Uterus (tissue), 4 donors: ENCODE measurements at regions of chr14 and their contacts with region 1.

Region 1: DNA sequence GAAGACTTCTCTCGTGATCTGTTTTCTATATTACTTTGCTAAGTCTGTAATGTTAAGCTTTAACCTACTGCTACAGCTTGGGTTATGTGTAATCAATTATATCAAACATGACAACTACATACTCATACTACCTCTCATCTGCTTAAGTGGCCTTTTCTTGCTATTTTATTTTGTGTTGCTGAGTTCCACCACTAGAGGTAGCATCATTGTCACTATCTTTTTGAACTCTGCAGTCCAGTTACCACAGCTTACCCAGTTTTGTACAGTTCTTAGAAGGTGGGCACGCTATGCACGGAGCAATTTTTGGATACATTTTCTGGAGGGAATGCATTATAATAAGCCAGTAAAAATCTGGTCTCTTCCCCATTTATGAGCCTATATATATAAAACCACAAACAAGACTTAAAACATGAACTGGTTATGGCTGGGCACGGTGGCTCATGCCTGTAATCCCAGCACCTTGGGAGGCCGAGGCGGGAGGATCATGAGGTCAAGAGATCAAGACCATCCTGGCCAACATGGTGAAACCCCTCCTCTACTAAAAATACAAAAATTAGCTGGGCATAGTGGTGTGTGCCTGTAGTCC is 48.5 kb downstream of the SAV1 start:
- DNase-seq: no peak
- H3K4me3 ChIP-seq: no peak overlapping the region
- H3K27ac ChIP-seq: no peak overlapping the region
- H3K4me1 ChIP-seq: no peaks in the 10 kb centered on the region
- H3K27me3 ChIP-seq: no peaks in the 10 kb centered on the region
- CTCF ChIP-seq: peak; percentile 32 to 45 (median 38)
- POLR2A ChIP-seq: no peak

Region 2: GRCh38 chr14:49405291-49405690 is 1214.4 kb before region 1 on chr14:
- intact Hi-C with region 1: no loop called
- DNase-seq: no peak
- H3K4me3 ChIP-seq: no peak overlapping the region
- H3K27ac ChIP-seq: no peak overlapping the region
- H3K4me1 ChIP-seq: no peaks in the 10 kb centered on the region
- H3K27me3 ChIP-seq: no peaks in the 10 kb centered on the region
- CTCF ChIP-seq: no peak
- POLR2A ChIP-seq: no peak

Region 3: GRCh38 chr14:50003213-50004031 is 616.2 kb before region 1 on chr14:
- intact Hi-C with region 1: no loop called
- DNase-seq: peak; percentile 73 to 81
- H3K4me3 ChIP-seq: peak overlapping the region; percentile 27 to 48
- H3K27ac ChIP-seq: peak overlapping the region; percentile 85 to 87
- H3K4me1 ChIP-seq: peaks cover 5 to 13% of the 10 kb centered on the region in 2 donors
- H3K27me3 ChIP-seq: no peaks in the 10 kb centered on the region
- CTCF ChIP-seq: peak in 2 of 4 experiments; percentile 25 to 49
- POLR2A ChIP-seq: peak; percentile 30 to 39

Region 4: DNA sequence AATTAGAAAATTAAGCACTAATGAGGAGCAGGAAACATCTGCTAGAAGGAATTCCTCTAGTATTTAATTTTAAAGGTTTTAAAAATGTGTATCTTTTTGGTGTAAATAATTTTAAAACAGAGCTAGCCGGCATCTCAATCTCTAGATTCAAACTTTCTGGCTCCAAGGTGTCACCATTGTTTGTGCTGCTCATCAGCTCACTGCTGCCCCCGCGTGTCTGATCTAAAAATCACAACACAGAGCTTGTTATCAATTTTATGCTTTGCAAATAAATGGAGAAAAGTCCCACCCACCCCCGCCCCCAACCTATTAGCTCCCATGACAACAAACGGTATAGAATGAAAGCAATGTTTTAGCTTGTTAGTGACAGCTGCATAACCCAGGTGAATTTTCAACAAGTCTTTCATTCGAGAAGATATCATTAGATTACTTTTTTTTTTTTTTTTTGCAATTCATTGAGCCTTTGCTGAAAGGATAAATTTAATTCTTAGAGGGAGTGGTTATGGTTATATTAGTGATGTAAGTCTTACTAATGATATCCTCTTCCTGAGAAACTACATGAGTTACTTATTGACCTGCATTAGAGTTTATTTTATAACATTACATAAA is 240.9 kb after region 1 on chr14:
- intact Hi-C with region 1: loop called (anchors 10 kb)
- DNase-seq: peak; percentile 77 to 81
- H3K4me3 ChIP-seq: peak overlapping the region; percentile 37 to 50
- H3K27ac ChIP-seq: peak overlapping the region; percentile 80 to 89
- H3K4me1 ChIP-seq: peaks cover 0 to 4% of the 10 kb centered on the region in 2 donors
- H3K27me3 ChIP-seq: no peaks in the 10 kb centered on the region
- CTCF ChIP-seq: peak; percentile 56 to 85 (median 71)
- POLR2A ChIP-seq: no peak